ENCODE measurements at regions of chr10 and their contacts with region 1.

Region 1: GRCh38 chr10:61750929-61751471 is 88.3 kb downstream of the CABCOCO1 start:
- DNase-seq: no peak
- H3K4me3 ChIP-seq: no peak overlapping the region
- H3K27me3 ChIP-seq: no peaks in the 10 kb centered on the region
- CTCF ChIP-seq: peak; percentile 71

Region 2: GRCh38 chr10:61735879-61736278 is 15.1 kb before region 1 on chr10:
- CTCF ChIA-PET with region 1: interaction called, 28 read pairs
- POLR2A ChIA-PET with region 1: no interaction called
- DNase-seq: no peak
- H3K4me3 ChIP-seq: no peak overlapping the region
- H3K27me3 ChIP-seq: no peaks in the 10 kb centered on the region
- CTCF ChIP-seq: no peak

Region 3: DNA sequence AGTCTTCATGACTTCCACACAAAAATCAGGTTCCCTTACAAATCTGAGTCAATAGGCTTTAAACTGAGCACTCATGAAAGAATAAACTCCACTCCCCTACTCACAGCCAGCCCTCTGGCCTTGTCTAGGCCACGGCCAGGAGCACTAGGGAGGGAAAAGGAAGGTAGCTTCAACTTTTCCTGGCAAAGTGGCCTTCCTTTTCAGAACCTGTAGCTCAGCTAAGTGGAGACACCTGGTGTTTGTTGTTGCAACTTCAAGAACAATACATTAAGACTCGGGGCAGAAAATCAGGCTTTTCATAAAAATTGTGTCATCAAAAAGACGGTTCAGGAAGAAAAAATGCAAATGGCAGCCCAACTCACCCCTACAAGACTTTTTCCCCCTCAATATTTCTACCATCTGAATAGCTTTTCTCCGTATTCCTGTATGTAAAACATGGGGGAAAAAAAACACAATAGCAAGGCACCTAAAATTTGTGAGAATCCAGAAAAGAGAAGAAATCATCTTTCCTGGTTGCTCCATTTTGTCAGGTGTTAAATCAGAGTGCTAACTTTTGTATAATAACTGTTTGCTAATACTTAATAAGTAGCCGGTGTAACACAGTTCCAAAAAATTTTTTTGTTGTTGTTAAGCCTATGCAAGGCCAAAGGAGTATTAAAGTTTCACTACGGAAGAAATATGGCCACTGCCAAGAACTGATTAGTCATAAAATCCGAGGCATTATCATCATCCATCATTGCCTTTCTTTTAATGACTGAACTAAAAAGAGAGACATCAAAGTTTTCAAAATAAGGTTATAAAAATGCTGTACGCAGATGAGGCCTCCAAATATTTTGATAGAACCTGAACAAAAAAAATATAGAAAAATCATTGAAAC is 84.3 kb after region 1 on chr10:
- CTCF ChIA-PET with region 1: interaction called, 23 read pairs
- POLR2A ChIA-PET with region 1: no interaction called
- DNase-seq: peak; percentile 46
- H3K4me3 ChIP-seq: no peak overlapping the region
- H3K27me3 ChIP-seq: no peaks in the 10 kb centered on the region
- CTCF ChIP-seq: peak; percentile 58

Region 4: GRCh38 chr10:62082729-62083411 is 331.9 kb after region 1 on chr10:
- CTCF ChIA-PET with region 1: no interaction called
- POLR2A ChIA-PET with region 1: no interaction called
- DNase-seq: no peak
- H3K4me3 ChIP-seq: no peak overlapping the region
- H3K27me3 ChIP-seq: no peaks in the 10 kb centered on the region
- CTCF ChIP-seq: no peak